BJ (cell line): ENCODE measurements at regions of chr11 and their contacts with region 1.

Region 1: DNA sequence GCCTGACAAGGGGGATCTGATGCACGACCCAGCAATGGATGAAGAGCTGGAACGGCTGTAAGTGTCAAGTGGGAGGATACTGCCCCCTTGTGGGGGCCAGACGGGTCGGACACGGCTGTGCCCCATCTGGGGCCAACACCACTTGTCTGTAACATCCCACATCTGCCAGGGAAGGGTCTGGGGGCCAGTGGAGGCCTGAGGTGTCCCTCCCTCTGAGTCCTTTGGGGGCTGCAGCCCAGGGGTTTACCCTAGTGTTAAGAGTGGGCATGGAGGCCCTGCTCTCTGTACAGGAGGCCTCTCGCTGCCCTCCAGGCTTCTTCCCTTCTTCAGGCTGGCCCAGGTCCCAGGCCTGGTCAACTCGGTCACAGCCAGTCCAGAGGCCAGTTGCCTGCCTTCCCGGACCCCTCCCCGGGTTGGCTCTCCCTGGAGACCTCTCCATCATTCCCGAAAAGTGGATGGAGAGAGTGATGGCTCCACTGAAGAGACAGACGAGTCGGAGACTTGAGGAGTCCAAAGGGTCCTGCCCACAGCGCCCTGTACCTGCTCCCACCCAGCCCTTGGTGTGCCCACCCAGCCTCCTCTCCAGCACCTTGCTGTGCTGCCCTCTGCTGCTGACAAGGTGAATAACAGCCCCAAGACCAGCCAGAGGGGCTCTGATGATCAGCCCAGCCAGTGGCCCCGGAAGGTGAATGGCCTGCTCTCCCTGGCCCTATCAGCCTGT is 15.4 kb downstream of the ARFGAP2 start:
- DNase-seq: no peak
- H3K4me3 ChIP-seq: no peak overlapping the region
- H3K27me3 ChIP-seq: no peaks in the 10 kb centered on the region
- CTCF ChIP-seq: peak; percentile 80

Region 2: DNA sequence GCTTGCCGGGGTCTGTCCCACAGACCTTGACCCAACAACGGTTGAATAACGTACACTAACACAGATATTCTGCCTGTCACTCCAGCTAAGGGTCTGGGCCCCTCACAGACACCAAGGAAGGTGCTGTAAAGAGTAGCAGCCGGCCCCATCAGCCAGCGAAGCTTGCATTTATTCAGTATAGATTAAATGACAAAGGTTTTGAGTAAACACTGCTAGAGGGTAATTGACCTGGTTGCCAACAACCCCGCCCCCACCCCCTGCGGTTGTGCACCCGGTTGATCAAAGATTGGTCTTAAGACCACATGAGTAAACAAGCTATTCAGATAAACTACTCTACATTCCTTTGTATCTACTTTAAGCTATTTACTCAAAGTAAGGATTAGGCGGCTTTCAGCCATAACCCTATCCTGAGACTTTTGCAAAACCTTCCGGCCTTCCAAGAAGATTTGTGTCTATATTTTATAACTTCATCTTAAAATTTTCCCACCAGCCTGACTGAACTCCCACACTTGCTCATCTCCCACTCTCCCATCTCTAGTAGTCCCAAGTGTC is 310.4 kb before region 1 on chr11:
- CTCF ChIA-PET with region 1: no interaction called
- POLR2A ChIA-PET with region 1: no interaction called
- DNase-seq: no peak
- H3K4me3 ChIP-seq: no peak overlapping the region
- H3K27me3 ChIP-seq: no peaks in the 10 kb centered on the region
- CTCF ChIP-seq: no peak

Region 3: GRCh38 chr11:46889689-46890475 is 271.4 kb before region 1 on chr11:
- CTCF ChIA-PET with region 1: interaction called, 12 read pairs
- POLR2A ChIA-PET with region 1: no interaction called
- DNase-seq: peak; percentile 9
- H3K4me3 ChIP-seq: no peak overlapping the region
- H3K27me3 ChIP-seq: no peaks in the 10 kb centered on the region
- CTCF ChIP-seq: peak; percentile 84

Region 4: DNA sequence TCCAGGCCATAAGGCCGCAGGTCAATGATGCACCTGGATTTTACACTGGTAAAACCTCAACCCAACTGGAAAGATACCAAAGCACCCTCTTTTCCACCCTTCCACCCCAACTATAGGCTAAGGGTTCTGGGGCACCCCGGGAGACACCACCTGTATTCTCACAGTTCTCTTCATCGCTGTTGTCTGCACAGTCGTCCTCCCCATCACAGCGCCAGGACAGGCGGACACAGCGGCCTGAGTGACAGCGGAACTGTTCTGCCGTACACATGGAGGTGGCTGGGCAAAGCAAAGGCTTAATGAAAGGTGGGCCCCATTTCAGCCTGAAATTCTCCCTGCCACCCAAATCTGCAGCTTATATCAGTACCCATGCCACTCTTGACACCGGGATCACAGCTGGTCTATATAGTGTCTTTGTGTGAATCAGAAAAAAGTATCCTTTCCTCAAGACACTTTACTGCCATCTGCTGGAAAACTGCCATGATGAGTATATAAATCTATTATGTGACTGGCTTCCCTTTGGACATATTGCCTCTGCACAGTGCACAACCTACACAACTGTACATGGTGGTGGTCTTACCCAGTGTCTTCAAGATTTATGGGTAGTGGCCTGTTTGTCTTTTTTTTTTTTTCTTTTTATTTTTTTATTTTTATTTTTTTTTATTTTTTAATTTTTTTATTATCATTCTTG is 264.4 kb before region 1 on chr11:
- CTCF ChIA-PET with region 1: interaction called, 13 read pairs
- POLR2A ChIA-PET with region 1: no interaction called
- DNase-seq: no peak
- H3K4me3 ChIP-seq: no peak overlapping the region
- H3K27me3 ChIP-seq: no peaks in the 10 kb centered on the region
- CTCF ChIP-seq: 0 out of 2 replicates have a peak, but pooled peaks have one; percentile 19

Region 5: DNA sequence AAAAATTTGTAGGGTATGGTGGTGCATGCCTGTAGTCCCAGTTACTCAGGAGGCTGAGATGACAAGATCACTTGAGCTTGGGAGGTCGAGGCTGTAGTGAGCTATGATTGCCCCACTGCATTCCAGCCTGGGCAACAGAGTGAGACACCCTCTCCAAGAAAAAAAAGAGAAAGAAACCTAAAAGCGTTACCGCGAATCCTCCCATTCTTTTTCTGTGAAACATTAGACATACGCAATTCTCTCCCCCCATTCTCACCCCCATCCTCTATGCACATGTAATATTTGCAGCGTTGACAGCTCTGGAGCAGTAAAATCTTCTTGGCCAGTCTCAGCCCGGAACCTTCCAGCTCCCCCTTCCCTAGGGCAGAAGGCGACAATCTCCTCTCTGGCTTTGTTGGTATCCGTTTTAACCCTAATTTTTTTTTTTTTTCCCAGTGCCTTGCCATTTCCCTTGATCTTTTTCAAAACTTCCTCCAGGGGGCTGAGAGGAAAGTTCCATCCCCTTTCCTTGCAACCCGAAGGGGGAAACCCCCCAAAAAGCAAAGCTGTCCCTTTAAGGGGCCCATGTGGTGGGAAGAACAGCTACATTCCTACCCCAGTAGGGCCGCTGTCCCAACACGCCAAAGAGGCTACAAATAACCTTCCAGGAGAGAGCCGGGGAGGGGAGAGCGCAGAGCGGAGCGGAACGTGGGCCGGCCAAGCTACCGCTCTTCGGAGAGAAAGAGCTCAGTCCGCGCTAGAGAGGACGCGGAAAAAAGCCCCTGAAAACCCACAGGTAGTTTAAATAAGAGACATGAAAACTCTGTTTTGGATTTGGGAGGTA is 244.8 kb before region 1 on chr11:
- CTCF ChIA-PET with region 1: interaction called, 10 read pairs
- POLR2A ChIA-PET with region 1: interaction called, 4 read pairs
- DNase-seq: no peak
- H3K4me3 ChIP-seq: peak overlapping the region; percentile 49
- H3K27me3 ChIP-seq: no peaks in the 10 kb centered on the region
- CTCF ChIP-seq: peak; percentile 39

Region 6: GRCh38 chr11:47176328-47177228 is 15.3 kb after region 1 on chr11 and contains the start of gene ARFGAP2:
- CTCF ChIA-PET with region 1: interaction called, 24 read pairs
- POLR2A ChIA-PET with region 1: no interaction called
- DNase-seq: peak; percentile 76
- H3K4me3 ChIP-seq: peak within 1 kb of the TSS; percentile 88
- H3K27me3 ChIP-seq: no peaks in the 10 kb centered on the region
- CTCF ChIP-seq: no peak
- polyA plus RNA-seq, gene ARFGAP2: 44.8 and 58.1 TPM in 2 replicates